ENCODE measurements at regions of chr9 and their contacts with region 1.

Region 1: GRCh38 chr9:38401994-38402393 is 9.5 kb downstream of the ALDH1B1 start:
- DNase-seq: no peak
- H3K4me3 ChIP-seq: no peak overlapping the region
- H3K27ac ChIP-seq: no peak overlapping the region
- H3K4me1 ChIP-seq: peaks cover 0 to 26% (median 5%) of the 10 kb centered on the region in 4 donors
- H3K27me3 ChIP-seq: peaks cover 0 to 4% (median 0%) of the 10 kb centered on the region in 3 donors
- CTCF ChIP-seq: no peak
- EP300 ChIP-seq: no peak
- POLR2A ChIP-seq: no peak

Region 2: DNA sequence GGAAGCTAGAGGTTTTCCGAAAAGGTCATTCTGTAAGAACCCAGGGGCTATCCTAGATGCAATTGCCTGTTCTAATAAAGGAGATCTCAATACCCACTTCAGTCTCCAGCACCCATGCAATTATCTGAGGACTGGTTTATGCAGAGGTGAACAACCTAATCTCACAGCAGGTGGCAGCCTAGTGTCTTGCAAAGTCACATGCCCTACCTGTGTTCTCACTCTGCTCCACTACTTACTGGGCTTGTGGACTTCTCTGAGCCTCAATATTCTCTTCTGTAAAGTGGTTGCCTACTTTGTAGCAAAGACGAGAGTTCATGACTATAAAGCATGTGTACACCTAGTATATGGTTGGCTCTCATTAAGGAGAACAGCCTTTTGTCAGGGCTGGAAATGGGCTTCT is 30.5 kb before region 1 on chr9:
- intact Hi-C with region 1: loop called (anchors 2 kb)
- DNase-seq: no peak
- H3K4me3 ChIP-seq: no peak overlapping the region
- H3K27ac ChIP-seq: peak overlapping the region in 1 of 4 donors; percentile 78
- H3K4me1 ChIP-seq: peaks cover 0 to 39% (median 21%) of the 10 kb centered on the region in 4 donors
- H3K27me3 ChIP-seq: no peaks in the 10 kb centered on the region
- CTCF ChIP-seq: peak in 2 of 4 experiments; percentile 14 to 31
- EP300 ChIP-seq: no peak
- POLR2A ChIP-seq: no peak

Region 3: DNA sequence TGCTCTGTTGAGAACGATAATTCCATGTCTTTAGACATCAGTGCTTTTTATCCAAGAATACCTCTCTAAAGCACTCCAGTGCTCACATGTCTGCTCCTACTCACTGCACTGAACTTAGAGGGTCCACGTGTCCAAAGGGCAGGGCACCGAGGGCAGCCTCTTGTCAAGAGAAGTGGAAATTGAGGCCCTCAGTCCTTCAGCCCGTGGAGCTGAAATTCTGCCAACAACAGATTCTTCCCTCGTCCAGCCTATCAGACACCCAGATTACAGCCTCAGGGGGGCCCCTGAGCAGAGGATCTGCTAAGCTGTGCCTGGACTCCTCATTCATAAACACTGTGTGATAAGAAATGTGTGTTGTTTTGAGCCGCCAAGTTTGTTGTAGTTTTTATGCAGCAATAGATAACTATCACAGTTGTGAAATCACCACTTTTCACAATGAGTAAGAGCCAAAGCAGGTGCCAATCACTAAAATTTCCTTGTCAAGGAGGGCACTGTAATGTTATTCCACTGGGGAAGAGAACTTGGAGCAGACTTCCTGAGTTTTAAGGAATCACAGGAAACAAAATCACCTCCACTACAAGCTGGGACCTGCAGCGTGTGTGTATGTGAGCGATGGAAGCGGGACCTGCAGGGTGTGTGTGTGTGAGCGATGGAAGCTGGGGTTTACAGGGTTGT is 81.1 kb after region 1 on chr9:
- intact Hi-C with region 1: no loop called
- DNase-seq: no peak
- H3K4me3 ChIP-seq: no peak overlapping the region
- H3K27ac ChIP-seq: no peak overlapping the region
- H3K4me1 ChIP-seq: no peaks in the 10 kb centered on the region
- H3K27me3 ChIP-seq: peaks cover 0 to 11% (median 0%) of the 10 kb centered on the region in 3 donors
- CTCF ChIP-seq: no peak
- EP300 ChIP-seq: no peak
- POLR2A ChIP-seq: no peak

Measured in sigmoid colon (tissue), 7 donors.